Natural killer cell (primary cell): ENCODE measurements at regions of chr19 and their contacts with region 1.

Region 1: GRCh38 chr19:13007292-13008045 is 12.2 kb downstream of the NFIX start:
- DNase-seq: no peak
- ATAC-seq: no peak
- H3K4me3 ChIP-seq: no peak overlapping the region
- H3K4me3 Mint-ChIP-seq: no peak overlapping the region
- H3K27ac ChIP-seq: no peak overlapping the region
- H3K27ac Mint-ChIP-seq: no peak overlapping the region
- H3K4me1 ChIP-seq: peaks cover 12% of the 10 kb centered on the region
- H3K4me1 Mint-ChIP-seq: peaks cover 0 to 2% of the 10 kb centered on the region in 2 donors
- H3K27me3 ChIP-seq: peaks cover 39% of the 10 kb centered on the region
- H3K27me3 Mint-ChIP-seq: peaks cover 12 to 45% of the 10 kb centered on the region in 2 donors
- CTCF ChIP-seq: no peak

Region 2: GRCh38 chr19:12938234-12939025 is 69.0 kb before region 1 on chr19 and contains the start of gene CALR:
- intact Hi-C with region 1: no loop called
- DNase-seq: peak; percentile 99
- ATAC-seq: peak; percentile 84 to 96 (median 87)
- H3K4me3 ChIP-seq: peak within 1 kb of the TSS; percentile 85
- H3K4me3 Mint-ChIP-seq: peak within 1 kb of the TSS; percentile 96
- H3K27ac ChIP-seq: peak within 1 kb of the TSS; percentile 78
- H3K27ac Mint-ChIP-seq: peak within 1 kb of the TSS; percentile 96
- H3K4me1 ChIP-seq: peaks cover 59% of the 10 kb centered on the region
- H3K4me1 Mint-ChIP-seq: peaks cover 46 to 48% of the 10 kb centered on the region in 2 donors
- H3K27me3 ChIP-seq: no peaks in the 10 kb centered on the region
- H3K27me3 Mint-ChIP-seq: no peaks in the 10 kb centered on the region
- CTCF ChIP-seq: no peak
- total RNA-seq, gene CALR: 588 to 813 (median 763) TPM

Region 3: GRCh38 chr19:13051267-13052165 is 44.0 kb after region 1 on chr19:
- intact Hi-C with region 1: loop called (anchors 2 kb)
- DNase-seq: peak in 1 of 2 donors; percentile 38
- ATAC-seq: peak in 1 of 3 donors; percentile 28
- H3K4me3 ChIP-seq: no peak overlapping the region
- H3K4me3 Mint-ChIP-seq: no peak overlapping the region
- H3K27ac ChIP-seq: no peak overlapping the region
- H3K27ac Mint-ChIP-seq: peak overlapping the region in 1 of 2 donors; percentile 8
- H3K4me1 ChIP-seq: peaks cover 12% of the 10 kb centered on the region
- H3K4me1 Mint-ChIP-seq: peaks cover 9 to 21% of the 10 kb centered on the region in 2 donors
- H3K27me3 ChIP-seq: peaks cover 9% of the 10 kb centered on the region
- H3K27me3 Mint-ChIP-seq: peaks cover 26 to 38% of the 10 kb centered on the region in 2 donors
- CTCF ChIP-seq: no peak